ENCODE measurements at regions of chr3 and their contacts with region 1.

Region 1: DNA sequence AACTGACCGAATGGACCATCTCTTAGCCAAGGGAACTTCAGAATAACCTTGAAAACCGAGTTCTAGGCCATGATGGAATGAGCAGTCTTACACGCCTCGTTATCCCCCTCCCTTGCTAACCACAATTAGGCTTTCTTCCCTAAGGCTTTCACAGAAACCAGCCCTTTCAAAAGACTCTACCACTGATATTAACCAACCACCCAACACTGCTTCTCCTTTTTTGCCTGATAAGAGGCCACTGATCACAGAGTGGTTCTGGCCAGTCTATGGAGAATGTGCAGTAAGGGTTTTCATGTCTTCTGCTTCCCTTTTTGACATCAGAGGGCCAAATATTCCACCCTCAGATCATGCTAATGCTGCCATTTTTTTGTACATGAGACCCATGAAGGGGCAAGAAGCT is 59.3 kb downstream of the MCF2L2 start:
- DNase-seq: no peak
- H3K4me3 Mint-ChIP-seq: peak overlapping the region; percentile 20
- H3K27ac Mint-ChIP-seq: peak overlapping the region; percentile 96
- H3K4me1 Mint-ChIP-seq: peaks cover 26% of the 10 kb centered on the region
- H3K27me3 Mint-ChIP-seq: no peaks in the 10 kb centered on the region
- CTCF ChIP-seq: no peak

Region 2: DNA sequence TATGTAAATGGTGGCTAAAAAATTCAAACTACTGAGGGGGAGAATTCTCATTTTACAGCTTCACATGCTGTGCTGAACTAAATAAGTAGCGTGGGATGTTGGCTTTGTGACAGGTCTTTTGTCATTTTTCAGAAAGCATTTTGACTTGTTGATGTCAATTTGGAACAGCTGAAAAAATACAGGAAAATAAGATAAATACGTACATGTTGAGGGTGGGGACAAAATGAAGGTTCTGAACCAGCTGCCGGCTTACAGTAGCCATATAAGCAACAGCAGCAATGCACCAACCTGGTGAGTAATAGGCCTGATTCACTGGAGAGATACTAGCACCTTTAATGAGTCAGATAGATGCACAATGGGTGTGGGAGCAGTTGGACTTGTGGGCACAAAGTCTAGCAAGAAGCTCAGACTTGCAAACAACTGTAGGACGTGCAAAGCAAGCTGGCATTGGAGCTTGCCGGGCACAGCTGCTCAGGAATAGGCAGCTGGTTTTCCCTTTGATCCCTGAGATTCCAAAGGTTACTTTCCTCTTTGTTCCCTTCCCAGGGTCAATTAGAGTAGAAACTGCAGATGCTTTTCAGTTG is 103.2 kb before region 1 on chr3:
- CTCF ChIA-PET with region 1: interaction called, 3 read pairs
- POLR2A ChIA-PET with region 1: interaction called, 21 read pairs
- intact Hi-C with region 1: no loop called
- DNase-seq: peak; percentile 96
- H3K4me3 Mint-ChIP-seq: no peak overlapping the region
- H3K27ac Mint-ChIP-seq: no peak overlapping the region
- H3K4me1 Mint-ChIP-seq: peaks cover 24% of the 10 kb centered on the region
- H3K27me3 Mint-ChIP-seq: no peaks in the 10 kb centered on the region
- CTCF ChIP-seq: no peak

Region 3: GRCh38 chr3:183285828-183286457 is 83.2 kb before region 1 on chr3:
- CTCF ChIA-PET with region 1: interaction called, 7 read pairs
- POLR2A ChIA-PET with region 1: interaction called, 95 read pairs
- intact Hi-C with region 1: loop called (anchors 2 kb)
- DNase-seq: peak; percentile 99
- H3K4me3 Mint-ChIP-seq: peak overlapping the region; percentile 48
- H3K27ac Mint-ChIP-seq: peak overlapping the region; percentile 91
- H3K4me1 Mint-ChIP-seq: peaks cover 31% of the 10 kb centered on the region
- H3K27me3 Mint-ChIP-seq: no peaks in the 10 kb centered on the region
- CTCF ChIP-seq: no peak

Region 4: DNA sequence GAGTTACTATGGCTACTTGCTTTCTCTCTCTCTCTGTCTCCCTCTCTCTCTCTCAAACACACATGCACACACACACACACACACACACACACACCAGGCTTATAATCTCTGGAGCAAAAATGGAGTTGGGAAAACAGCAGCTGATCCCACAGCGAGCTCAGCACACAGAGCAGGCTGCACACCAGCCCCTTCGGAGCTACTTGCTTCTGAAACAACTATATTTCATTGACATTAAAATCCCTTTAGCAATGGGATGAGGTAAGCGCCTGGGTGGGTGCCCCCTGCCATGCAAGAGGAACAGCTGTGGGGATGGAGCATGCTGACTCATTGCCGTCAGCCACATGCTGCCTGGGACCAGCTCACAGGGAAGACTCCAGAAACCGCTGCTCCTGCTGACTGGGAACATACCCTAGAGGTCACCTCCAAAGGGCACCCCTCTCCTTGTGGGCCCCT is 70.4 kb before region 1 on chr3:
- CTCF ChIA-PET with region 1: interaction called, 3 read pairs
- POLR2A ChIA-PET with region 1: interaction called, 30 read pairs
- intact Hi-C with region 1: no loop called
- DNase-seq: peak; percentile 87
- H3K4me3 Mint-ChIP-seq: no peak overlapping the region
- H3K27ac Mint-ChIP-seq: no peak overlapping the region
- H3K4me1 Mint-ChIP-seq: peaks cover 43% of the 10 kb centered on the region
- H3K27me3 Mint-ChIP-seq: no peaks in the 10 kb centered on the region
- CTCF ChIP-seq: no peak

Region 5: GRCh38 chr3:183385698-183386613 is 16.8 kb after region 1 on chr3:
- CTCF ChIA-PET with region 1: interaction called, 8 read pairs
- POLR2A ChIA-PET with region 1: interaction called, 34 read pairs
- intact Hi-C with region 1: no loop called
- DNase-seq: peak; percentile 78
- H3K4me3 Mint-ChIP-seq: no peak overlapping the region
- H3K27ac Mint-ChIP-seq: no peak overlapping the region
- H3K4me1 Mint-ChIP-seq: peaks cover 18% of the 10 kb centered on the region
- H3K27me3 Mint-ChIP-seq: no peaks in the 10 kb centered on the region
- CTCF ChIP-seq: peak; percentile 77

Region 6: DNA sequence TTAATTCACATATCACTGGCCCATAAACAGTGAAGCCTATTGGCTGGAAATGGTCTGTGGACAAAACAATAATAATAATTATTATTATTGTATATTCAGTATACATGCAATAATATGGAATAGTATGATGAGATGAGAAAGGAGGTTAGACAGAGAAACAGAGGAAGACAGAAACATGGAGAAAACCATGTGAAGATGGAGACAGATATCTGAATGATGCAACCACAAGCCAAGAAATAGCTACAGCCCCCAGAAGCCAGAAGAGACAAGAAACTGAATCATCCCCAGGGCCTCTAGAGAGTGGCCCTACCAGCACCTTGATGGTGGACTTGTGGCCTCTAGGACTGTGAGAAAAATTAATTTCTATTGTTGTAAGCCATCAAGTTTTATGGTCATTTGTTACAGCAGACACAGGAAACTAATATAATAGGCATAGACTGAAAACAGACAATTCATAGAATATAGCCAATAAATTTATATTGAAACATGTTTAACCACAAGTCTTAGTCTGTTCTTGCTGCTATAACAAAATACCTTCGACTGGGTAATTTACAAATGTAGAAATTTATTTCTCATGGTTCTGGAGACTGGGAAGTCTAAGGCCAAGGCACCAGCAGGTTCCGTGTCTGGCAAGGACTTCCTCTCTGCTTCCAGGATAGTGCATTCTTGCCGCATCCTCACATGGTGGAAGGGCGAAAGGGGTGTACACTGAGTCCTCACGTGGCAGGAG is 27.7 kb after region 1 on chr3:
- CTCF ChIA-PET with region 1: no interaction called
- POLR2A ChIA-PET with region 1: no interaction called
- intact Hi-C with region 1: no loop called
- DNase-seq: no peak
- H3K4me3 Mint-ChIP-seq: no peak overlapping the region
- H3K27ac Mint-ChIP-seq: no peak overlapping the region
- H3K4me1 Mint-ChIP-seq: no peaks in the 10 kb centered on the region
- H3K27me3 Mint-ChIP-seq: no peaks in the 10 kb centered on the region
- CTCF ChIP-seq: no peak

Region 7: DNA sequence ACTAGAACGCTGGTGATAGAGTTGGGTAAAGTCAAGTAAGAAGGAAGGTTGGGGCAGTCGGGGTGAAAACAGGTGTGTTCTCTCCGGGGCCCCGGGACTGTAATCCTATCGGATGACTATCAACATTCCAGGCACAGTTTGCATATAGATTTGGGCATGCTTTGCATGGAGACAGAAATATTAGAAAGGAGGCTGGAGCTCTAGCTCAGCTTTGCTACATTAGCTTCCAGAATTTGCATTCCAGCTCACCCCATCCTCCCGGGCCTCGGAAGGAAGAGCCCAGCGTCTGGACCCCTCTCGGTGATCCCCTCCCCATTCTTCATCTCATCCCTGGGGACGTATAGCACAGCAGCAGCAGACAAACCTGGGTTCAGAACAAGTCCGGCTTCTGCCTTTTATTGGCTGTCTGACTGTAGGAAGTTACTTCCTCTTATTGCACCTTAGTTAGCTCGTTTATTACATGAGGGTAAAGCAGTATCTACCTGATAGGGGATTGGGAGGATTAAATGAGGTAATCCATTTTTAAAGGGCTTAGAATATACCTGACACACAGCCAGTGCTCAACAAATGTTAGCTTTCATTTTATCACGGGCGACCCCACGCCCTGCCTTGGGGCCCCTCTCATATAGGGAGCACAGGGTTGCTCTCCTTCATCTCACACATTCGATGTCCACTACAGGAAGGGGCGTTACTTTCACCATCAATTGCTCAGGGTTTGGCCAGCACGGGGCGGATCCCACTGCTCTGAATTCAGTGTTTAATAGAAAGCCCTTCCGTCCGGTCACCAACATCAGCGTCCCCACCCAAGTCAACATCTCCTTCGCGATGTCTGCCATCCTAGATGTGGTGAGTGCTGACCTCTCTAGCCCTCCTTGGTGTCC is 730.9 kb after region 1 on chr3:
- CTCF ChIA-PET with region 1: no interaction called
- POLR2A ChIA-PET with region 1: no interaction called
- intact Hi-C with region 1: no loop called
- DNase-seq: no peak
- H3K4me3 Mint-ChIP-seq: no peak overlapping the region
- H3K27ac Mint-ChIP-seq: no peak overlapping the region
- H3K4me1 Mint-ChIP-seq: no peaks in the 10 kb centered on the region
- H3K27me3 Mint-ChIP-seq: no peaks in the 10 kb centered on the region
- CTCF ChIP-seq: no peak